Left ventricle myocardium superior (tissue), 1 donor: ENCODE measurements at regions of chr1 and their contacts with region 1.

Region 1: GRCh38 chr1:91511386-91511785 is 10.7 kb downstream of the CDC7 start:
- DNase-seq: no peak
- ATAC-seq: peak; percentile 32

Region 2: GRCh38 chr1:91165033-91165654 is 346.2 kb before region 1 on chr1:
- intact Hi-C with region 1: no loop called
- DNase-seq: peak; percentile 81
- ATAC-seq: peak; percentile 94

Region 3: GRCh38 chr1:91929250-91929649 is 417.9 kb after region 1 on chr1:
- intact Hi-C with region 1: loop called (anchors 5 kb)
- DNase-seq: no peak
- ATAC-seq: peak; percentile 69